Tibial artery (tissue), 4 donors: ENCODE measurements at regions of chr15 and their contacts with region 1.

Region 1: GRCh38 chr15:77870195-77871065 is 207.1 kb downstream of the TBC1D2B start:
- DNase-seq: peak; percentile 52 to 81
- H3K4me3 ChIP-seq: no peak overlapping the region
- H3K27ac ChIP-seq: no peak overlapping the region
- H3K4me1 ChIP-seq: peaks cover 0 to 14% (median 9%) of the 10 kb centered on the region in 4 donors
- H3K27me3 ChIP-seq: no peaks in the 10 kb centered on the region
- CTCF ChIP-seq: peak; percentile 94 to 96

Region 2: GRCh38 chr15:77901974-77902750 is 31.7 kb after region 1 on chr15:
- intact Hi-C with region 1: loop called (anchors 2 kb)
- DNase-seq: peak; percentile 6 to 40
- H3K4me3 ChIP-seq: no peak overlapping the region
- H3K27ac ChIP-seq: no peak overlapping the region
- H3K4me1 ChIP-seq: peaks cover 0 to 15% (median 3%) of the 10 kb centered on the region in 4 donors
- H3K27me3 ChIP-seq: no peaks in the 10 kb centered on the region
- CTCF ChIP-seq: no peak

Region 3: GRCh38 chr15:78065284-78065872 is 194.9 kb after region 1 on chr15:
- intact Hi-C with region 1: no loop called
- DNase-seq: peak; percentile 91 to 94
- H3K4me3 ChIP-seq: peak overlapping the region in 1 of 2 donors; percentile 22
- H3K27ac ChIP-seq: peak overlapping the region; percentile 81 to 87
- H3K4me1 ChIP-seq: peaks cover 0 to 100% (median 80%) of the 10 kb centered on the region in 4 donors
- H3K27me3 ChIP-seq: no peaks in the 10 kb centered on the region
- CTCF ChIP-seq: no peak